ENCODE measurements at regions of chr17 and their contacts with region 1.

Region 1: GRCh38 chr17:7561028-7561575 is 617 bp upstream of the SENP3 start:
- DNase-seq: peak; percentile 93
- ATAC-seq: peak; percentile 65
- H3K4me3 Mint-ChIP-seq: peak overlapping the region; percentile 94
- H3K27ac Mint-ChIP-seq: peak overlapping the region; percentile 97
- H3K4me1 Mint-ChIP-seq: peaks cover 53% of the 10 kb centered on the region
- H3K27me3 Mint-ChIP-seq: no peaks in the 10 kb centered on the region
- CTCF ChIP-seq: peak; percentile 46; the same call in 1 of the 2 replicates

Region 2: GRCh38 chr17:7060165-7060891 is 500.8 kb before region 1 on chr17:
- CTCF ChIA-PET with region 1: no interaction called
- POLR2A ChIA-PET with region 1: no interaction called
- DNase-seq: no peak
- ATAC-seq: no peak
- H3K4me3 Mint-ChIP-seq: no peak overlapping the region
- H3K27ac Mint-ChIP-seq: no peak overlapping the region
- H3K4me1 Mint-ChIP-seq: no peaks in the 10 kb centered on the region; the same call in 1 of the 2 replicates
- H3K27me3 Mint-ChIP-seq: peaks cover 30% of the 10 kb centered on the region
- CTCF ChIP-seq: no peak

Region 3: GRCh38 chr17:7137171-7137943 is 423.7 kb before region 1 on chr17:
- CTCF ChIA-PET with region 1: no interaction called
- POLR2A ChIA-PET with region 1: no interaction called
- DNase-seq: no peak
- ATAC-seq: no peak
- H3K4me3 Mint-ChIP-seq: no peak overlapping the region
- H3K27ac Mint-ChIP-seq: no peak overlapping the region
- H3K4me1 Mint-ChIP-seq: peaks cover 65% of the 10 kb centered on the region
- H3K27me3 Mint-ChIP-seq: peaks cover 43% of the 10 kb centered on the region
- CTCF ChIP-seq: no peak

Region 4: DNA sequence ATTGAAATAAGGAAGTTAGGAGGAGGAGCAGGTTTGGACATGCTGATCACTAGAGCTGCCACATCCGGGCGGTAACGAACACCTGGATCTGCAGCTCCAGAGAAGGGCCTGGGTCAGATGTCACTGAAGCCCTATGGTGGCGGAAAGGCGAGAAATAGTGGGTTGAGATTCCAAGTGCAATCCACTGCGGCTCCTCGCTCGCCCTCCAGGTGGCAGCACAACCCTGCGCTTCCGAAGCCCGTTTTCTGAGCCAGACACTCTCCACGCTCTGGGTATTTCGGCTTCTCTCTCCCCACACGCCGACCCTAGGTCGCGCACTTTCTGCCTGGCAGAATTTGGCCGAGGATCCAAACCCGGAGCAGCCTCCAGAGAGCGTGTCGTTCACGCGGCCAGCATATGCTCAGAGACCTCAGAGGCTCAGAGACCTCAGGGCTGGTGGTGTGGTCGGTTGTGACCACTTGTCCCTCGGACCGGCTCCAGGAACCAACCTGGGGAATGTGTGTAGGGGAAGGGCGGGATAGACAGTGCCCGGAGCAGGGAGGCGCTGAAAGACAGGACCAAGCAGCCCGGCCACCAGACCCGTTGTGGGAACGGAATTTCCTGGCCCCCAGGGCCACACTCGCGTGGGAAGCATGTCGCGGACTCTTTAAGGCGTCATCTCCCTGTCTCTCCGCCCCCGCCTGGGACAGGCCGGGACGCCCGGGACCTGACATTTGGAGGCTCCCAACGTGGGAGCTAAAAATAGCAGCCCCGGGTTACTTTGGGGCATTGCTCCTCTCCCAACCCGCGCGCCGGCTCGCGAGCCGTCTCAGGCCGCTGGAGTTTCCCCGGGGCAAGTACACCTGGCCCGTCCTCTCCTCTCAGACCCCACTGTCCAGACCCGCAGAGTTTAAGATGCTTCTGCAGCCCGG is 280.3 kb before region 1 on chr17:
- CTCF ChIA-PET with region 1: interaction called, 12 read pairs
- POLR2A ChIA-PET with region 1: interaction called, 4 read pairs
- DNase-seq: peak; percentile 95
- ATAC-seq: peak; percentile 83
- H3K4me3 Mint-ChIP-seq: peak overlapping the region; percentile 82
- H3K27ac Mint-ChIP-seq: peak overlapping the region; percentile 94
- H3K4me1 Mint-ChIP-seq: peaks cover 20% of the 10 kb centered on the region
- H3K27me3 Mint-ChIP-seq: peaks cover 21% of the 10 kb centered on the region
- CTCF ChIP-seq: peak; percentile 77

Region 5: GRCh38 chr17:7394452-7395191 is 166.5 kb before region 1 on chr17 and contains the start of gene PLSCR3:
- CTCF ChIA-PET with region 1: interaction called, 21 read pairs
- POLR2A ChIA-PET with region 1: no interaction called
- DNase-seq: peak; percentile 87
- ATAC-seq: peak; percentile 78
- H3K4me3 Mint-ChIP-seq: peak within 1 kb of the TSS; percentile 90
- H3K27ac Mint-ChIP-seq: peak within 1 kb of the TSS; percentile 85
- H3K4me1 Mint-ChIP-seq: peaks cover 11% of the 10 kb centered on the region
- H3K27me3 Mint-ChIP-seq: no peaks in the 10 kb centered on the region; the same call in 1 of the 2 replicates
- CTCF ChIP-seq: no peak
- total RNA-seq, gene PLSCR3: 34.1 to 42.7 TPM (median 37.6 TPM) in 3 replicates

Region 6: GRCh38 chr17:7477392-7478275 is 83.5 kb before region 1 on chr17:
- CTCF ChIA-PET with region 1: interaction called, 17 read pairs
- POLR2A ChIA-PET with region 1: no interaction called
- DNase-seq: no peak
- ATAC-seq: no peak
- H3K4me3 Mint-ChIP-seq: peak overlapping the region; percentile 80
- H3K27ac Mint-ChIP-seq: peak overlapping the region; percentile 66
- H3K4me1 Mint-ChIP-seq: peaks cover 48% of the 10 kb centered on the region
- H3K27me3 Mint-ChIP-seq: no peaks in the 10 kb centered on the region
- CTCF ChIP-seq: no peak

Region 7: DNA sequence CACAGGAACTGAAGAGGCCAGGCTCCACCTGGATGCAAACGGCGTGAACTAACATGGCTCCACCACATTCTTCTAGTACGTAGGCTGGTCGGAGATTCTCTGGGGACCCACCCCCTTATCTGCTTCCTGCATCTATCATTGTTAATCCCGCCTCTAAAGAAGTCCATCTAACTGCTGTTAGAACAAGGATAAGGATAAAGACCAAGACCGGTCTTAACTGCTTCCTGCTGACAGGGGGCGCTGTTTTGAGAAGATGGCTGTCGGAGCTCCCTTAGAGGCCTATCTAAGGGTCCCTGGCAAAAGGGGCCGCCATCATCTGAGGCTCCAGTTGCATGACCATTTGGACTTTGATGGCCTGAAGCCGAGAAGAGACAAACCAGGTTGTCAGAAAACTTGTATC is 38.1 kb before region 1 on chr17:
- CTCF ChIA-PET with region 1: interaction called, 79 read pairs
- POLR2A ChIA-PET with region 1: interaction called, 5 read pairs
- DNase-seq: peak; percentile 58
- ATAC-seq: peak; percentile 100
- H3K4me3 Mint-ChIP-seq: no peak overlapping the region
- H3K27ac Mint-ChIP-seq: peak overlapping the region; percentile 95
- H3K4me1 Mint-ChIP-seq: peaks cover 3% of the 10 kb centered on the region
- H3K27me3 Mint-ChIP-seq: peaks cover 24% of the 10 kb centered on the region
- CTCF ChIP-seq: peak; percentile 65

Region 8: GRCh38 chr17:7589204-7589868 is 28.2 kb after region 1 on chr17:
- CTCF ChIA-PET with region 1: interaction called, 61 read pairs
- POLR2A ChIA-PET with region 1: interaction called, 8 read pairs
- DNase-seq: peak; percentile 91
- ATAC-seq: peak; percentile 71
- H3K4me3 Mint-ChIP-seq: peak overlapping the region; percentile 70
- H3K27ac Mint-ChIP-seq: peak overlapping the region; percentile 79
- H3K4me1 Mint-ChIP-seq: peaks cover 38% of the 10 kb centered on the region
- H3K27me3 Mint-ChIP-seq: no peaks in the 10 kb centered on the region
- CTCF ChIP-seq: peak; percentile 87

Region 9: DNA sequence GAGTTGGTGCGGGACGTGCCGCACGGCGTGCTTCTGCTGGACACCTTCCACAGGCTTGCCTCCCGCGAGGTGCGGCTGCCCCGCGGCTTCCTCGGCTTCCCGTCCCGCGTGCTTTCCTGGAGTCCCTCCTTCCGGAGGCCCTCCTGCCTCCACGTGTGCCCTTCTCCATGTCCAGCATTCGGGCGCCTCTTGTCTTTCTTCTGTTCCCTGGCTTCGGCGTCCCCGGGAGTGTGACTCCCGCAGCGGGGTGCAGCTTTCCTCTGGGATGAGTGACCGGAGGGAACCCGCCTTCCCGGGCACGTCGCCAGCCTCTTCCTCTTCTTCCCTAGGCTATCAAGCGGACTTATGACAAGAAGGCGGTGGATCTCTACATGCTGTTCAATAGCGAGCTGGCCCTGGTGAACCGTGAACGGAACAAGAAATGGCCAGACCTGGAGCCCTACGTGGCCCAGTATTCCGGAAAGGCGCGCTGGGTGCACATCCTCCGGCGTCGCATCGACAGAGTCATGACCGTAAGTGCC is 179.4 kb after region 1 on chr17:
- CTCF ChIA-PET with region 1: no interaction called
- POLR2A ChIA-PET with region 1: no interaction called
- DNase-seq: no peak
- ATAC-seq: no peak
- H3K4me3 Mint-ChIP-seq: no peak overlapping the region
- H3K27ac Mint-ChIP-seq: no peak overlapping the region
- H3K4me1 Mint-ChIP-seq: no peaks in the 10 kb centered on the region
- H3K27me3 Mint-ChIP-seq: peaks cover 28% of the 10 kb centered on the region
- CTCF ChIP-seq: no peak